Spleen (tissue), 13 donors: ENCODE measurements at regions of chr9 and their contacts with region 1.

Region 1: DNA sequence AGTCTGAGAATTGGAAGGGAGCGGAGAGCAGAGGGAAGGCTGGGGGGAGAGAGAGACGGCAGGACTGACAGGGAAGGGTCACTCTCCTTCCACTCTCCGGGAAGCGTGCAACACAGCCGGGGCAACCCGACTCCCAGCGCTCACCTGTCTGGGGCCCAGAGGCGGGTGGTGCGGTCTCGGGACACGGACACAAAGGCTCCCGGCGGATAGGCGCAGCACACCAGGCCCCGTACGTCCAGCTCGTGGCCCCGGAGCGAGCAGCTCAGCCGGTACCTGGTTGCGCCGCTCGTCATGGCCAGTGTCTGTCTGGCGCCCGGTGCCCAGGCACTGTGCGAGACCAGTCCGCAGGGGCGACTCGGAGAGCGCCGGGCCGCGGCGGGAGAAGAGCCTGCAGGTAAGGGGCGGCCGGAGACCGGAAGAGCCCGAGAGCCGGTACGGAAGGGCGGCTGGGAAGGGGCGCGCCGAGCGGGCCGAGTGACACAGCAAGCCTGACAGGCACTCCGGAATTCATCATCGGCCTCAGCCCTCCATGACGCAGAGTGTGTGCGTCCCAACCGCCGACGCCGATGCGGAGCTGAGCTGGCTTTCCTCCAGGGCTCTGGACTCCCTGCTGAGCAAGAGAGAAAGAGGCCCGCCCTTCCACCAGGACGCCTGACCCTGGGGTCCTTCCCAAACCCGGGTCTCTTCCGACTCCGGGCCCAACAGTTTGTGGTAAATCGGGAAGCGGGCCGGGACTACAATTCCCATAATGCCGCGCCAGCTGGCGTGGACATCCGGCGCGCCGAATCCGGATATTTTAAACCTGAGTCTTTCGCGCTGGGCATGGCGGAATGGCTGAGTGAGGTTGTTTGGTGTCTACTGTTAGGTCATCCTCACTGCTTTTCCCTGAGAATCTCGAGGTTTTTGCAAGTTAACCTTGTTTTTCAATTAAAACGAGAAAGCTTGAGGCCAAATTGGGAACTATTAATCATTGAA is at the start of gene PLAA:
- DNase-seq: peak; percentile 98
- H3K4me3 ChIP-seq: peak within 1 kb of the TSS; percentile 74 to 99 (median 90)
- H3K27ac ChIP-seq: peak within 1 kb of the TSS; percentile 87 to 99 (median 97)
- H3K4me1 ChIP-seq: peaks cover 21 to 53% (median 46%) of the 10 kb centered on the region in 6 donors
- H3K27me3 ChIP-seq: no peaks in the 10 kb centered on the region
- CTCF ChIP-seq: peak in 9 of 11 experiments; percentile 5 to 44 (median 26)
- POLR2A ChIP-seq: peak in 1 of 3 donors; percentile 23
- total RNA-seq, gene PLAA: 20.9 to 34.5 (median 26.9) TPM

Region 2: GRCh38 chr9:26892251-26893029 is 54.6 kb before region 1 on chr9 and contains the start of gene CAAP1:
- intact Hi-C with region 1: loop called (anchors 10 kb)
- DNase-seq: peak; percentile 99
- H3K4me3 ChIP-seq: peak within 1 kb of the TSS; percentile 87 to 100 (median 98)
- H3K27ac ChIP-seq: peak within 1 kb of the TSS; percentile 93 to 99 (median 98)
- H3K4me1 ChIP-seq: peaks cover 15 to 51% (median 36%) of the 10 kb centered on the region in 6 donors
- H3K27me3 ChIP-seq: no peaks in the 10 kb centered on the region
- CTCF ChIP-seq: peak in 7 of 11 experiments; percentile 15 to 44 (median 33)
- POLR2A ChIP-seq: peak in 1 of 3 donors; percentile 74
- total RNA-seq, gene CAAP1: 11.9 to 22.3 (median 15.2) TPM

Region 3: GRCh38 chr9:26983340-26983739 is 36.3 kb after region 1 on chr9:
- intact Hi-C with region 1: no loop called
- DNase-seq: no peak
- H3K4me3 ChIP-seq: no peak overlapping the region
- H3K27ac ChIP-seq: no peak overlapping the region
- H3K4me1 ChIP-seq: no peaks in the 10 kb centered on the region
- H3K27me3 ChIP-seq: no peaks in the 10 kb centered on the region
- CTCF ChIP-seq: no peak
- POLR2A ChIP-seq: no peak

Region 4: DNA sequence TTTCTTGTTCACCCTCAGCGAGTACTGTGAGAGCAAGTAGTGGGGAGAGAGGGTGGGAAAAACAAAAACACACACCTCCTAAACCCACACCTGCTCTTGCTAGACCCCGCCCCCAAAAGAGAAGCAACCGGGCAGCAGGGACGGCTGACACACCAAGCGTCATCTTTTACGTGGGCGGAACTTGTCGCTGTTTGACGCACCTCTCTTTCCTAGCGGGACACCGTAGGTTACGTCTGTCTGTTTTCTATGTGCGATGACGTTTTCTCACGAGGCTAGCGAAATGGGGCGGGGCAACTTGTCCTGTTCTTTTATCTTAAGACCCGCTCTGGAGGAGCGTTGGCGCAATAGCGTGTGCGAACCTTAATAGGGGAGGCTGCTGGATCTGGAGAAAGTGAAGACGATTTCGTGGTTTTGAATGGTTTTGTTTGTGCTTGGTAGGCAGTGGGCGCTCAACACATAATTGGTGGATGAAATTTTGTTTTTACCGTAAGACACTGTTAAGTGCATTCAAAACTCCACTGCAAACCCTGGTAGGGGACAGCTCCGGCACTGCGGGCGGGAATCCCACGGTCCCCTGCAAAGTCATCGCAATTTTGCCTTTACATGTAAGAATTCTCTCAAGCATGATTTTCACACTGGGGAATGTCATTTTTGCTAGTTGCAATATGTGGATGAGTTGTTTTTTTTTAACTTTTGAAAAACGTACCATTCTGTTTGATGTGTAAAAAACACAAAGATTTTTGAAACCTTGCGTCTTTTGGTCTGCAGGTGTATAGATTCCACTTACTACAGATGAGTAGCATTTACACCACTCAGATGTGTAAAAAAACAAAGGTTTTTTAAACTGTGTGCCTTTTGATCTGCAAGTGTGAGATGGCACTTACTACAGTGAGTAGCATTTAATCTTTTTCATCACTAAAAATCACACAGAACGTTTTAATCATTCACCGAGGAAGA is 626.9 kb after region 1 on chr9:
- intact Hi-C with region 1: loop called (anchors 10 kb)
- DNase-seq: peak; percentile 98
- H3K4me3 ChIP-seq: peak overlapping the region; percentile 21 to 85 (median 64)
- H3K27ac ChIP-seq: peak overlapping the region; percentile 94 to 100 (median 98)
- H3K4me1 ChIP-seq: peaks cover 5 to 38% (median 16%) of the 10 kb centered on the region in 6 donors
- H3K27me3 ChIP-seq: no peaks in the 10 kb centered on the region
- CTCF ChIP-seq: peak in 3 of 11 experiments; percentile 5 to 30 (median 27)
- POLR2A ChIP-seq: peak; percentile 18 to 91 (median 62)